GM12878 (cell line): ENCODE measurements at regions of chr16 and their contacts with region 1.

Region 1: DNA sequence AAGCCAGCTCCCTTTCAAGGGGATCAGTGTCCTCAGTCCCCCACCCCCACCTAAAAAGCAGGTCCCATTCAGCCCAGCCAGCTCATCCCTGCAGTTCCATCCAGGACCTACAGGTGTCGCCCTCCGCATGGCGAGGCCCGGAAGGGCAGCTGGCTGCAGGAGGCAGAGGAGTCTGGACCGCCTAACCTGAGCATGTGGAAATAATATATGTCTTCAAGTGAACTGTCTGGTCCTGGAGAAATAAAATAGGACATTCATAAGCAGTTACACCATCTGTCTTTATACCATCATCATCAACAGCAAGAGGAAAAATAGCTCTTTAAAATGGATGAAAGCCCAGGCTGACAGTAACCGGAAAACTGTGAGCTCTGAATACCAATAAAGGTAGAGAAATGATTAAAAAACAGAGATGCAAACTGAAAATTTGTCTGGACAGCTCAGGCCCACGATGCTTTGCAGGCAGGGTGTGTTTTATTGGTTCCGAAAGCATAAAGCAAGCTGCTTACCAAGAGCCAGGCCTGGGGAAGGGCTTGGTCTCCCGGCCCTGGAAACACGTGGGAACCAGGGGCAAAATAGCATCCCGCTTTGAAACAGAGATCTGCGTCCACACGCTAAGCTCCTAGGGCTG is 215.2 kb downstream of the ZFHX3 start:
- DNase-seq: no peak
- ATAC-seq: peak; percentile 96
- H3K4me3 ChIP-seq: no peak overlapping the region
- H3K27ac ChIP-seq: no peak overlapping the region
- H3K4me1 ChIP-seq: peaks cover 8% of the 10 kb centered on the region
- H3K27me3 ChIP-seq: no peaks in the 10 kb centered on the region
- CTCF ChIP-seq: peak; percentile 95 to 100 (median 99); a peak in 5 of 6 replicates
- EP300 ChIP-seq: no peak
- POLR2A ChIP-seq: no peak
- RAD21 ChIP-seq: peak; percentile 96

Region 2: DNA sequence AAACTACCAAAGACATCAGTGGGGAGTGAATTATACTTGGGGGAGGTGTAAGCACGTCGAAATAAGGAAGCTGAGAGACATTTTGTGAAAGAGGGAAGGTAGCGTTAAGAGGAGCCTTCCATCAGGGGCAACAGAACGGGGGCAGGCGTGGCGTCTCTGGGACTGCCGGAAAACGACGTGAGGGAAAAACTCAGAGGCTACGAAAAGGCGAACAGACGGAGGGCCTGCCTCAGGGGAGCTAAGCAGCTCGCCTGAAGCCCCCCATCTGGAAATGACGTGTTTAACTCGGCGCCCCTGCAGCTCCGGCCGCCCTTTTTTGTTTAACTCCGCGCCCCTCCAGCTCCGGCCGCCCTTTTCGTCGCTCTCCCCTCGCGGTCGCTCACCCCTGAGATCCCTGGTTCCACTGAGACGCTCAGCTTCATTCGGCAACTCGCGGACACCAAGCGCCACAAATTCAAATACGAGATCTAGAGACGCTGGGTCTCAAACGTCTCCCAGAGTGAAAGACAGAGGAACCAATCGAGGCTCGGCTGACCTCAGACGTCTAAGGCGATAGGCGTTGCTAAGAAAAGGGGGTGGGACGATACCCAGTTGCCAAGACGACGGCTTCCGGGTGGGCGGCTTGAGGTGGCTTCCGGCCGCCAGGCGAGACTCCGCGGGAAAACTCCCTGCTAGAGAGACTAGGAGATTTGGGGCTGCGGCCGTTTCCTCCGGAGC is 168.1 kb before region 1 on chr16:
- CTCF ChIA-PET with region 1: interaction called, 18 read pairs
- POLR2A ChIA-PET with region 1: no interaction called
- RAD21 ChIA-PET with region 1: interaction called, 3 read pairs
- SMC1A ChIA-PET with region 1: interaction called, 3 read pairs
- in situ Hi-C with region 1: no loop called
- intact Hi-C with region 1: loop called (anchors 10 kb)
- DNase-seq: peak; percentile 94
- ATAC-seq: peak; percentile 98
- H3K4me3 ChIP-seq: peak overlapping the region; percentile 74
- H3K27ac ChIP-seq: peak overlapping the region; percentile 90
- H3K4me1 ChIP-seq: peaks cover under 1% of the 10 kb centered on the region
- H3K27me3 ChIP-seq: no peaks in the 10 kb centered on the region
- CTCF ChIP-seq: no peak
- EP300 ChIP-seq: no peak
- POLR2A ChIP-seq: peak; percentile 84
- RAD21 ChIP-seq: no peak

Region 3: DNA sequence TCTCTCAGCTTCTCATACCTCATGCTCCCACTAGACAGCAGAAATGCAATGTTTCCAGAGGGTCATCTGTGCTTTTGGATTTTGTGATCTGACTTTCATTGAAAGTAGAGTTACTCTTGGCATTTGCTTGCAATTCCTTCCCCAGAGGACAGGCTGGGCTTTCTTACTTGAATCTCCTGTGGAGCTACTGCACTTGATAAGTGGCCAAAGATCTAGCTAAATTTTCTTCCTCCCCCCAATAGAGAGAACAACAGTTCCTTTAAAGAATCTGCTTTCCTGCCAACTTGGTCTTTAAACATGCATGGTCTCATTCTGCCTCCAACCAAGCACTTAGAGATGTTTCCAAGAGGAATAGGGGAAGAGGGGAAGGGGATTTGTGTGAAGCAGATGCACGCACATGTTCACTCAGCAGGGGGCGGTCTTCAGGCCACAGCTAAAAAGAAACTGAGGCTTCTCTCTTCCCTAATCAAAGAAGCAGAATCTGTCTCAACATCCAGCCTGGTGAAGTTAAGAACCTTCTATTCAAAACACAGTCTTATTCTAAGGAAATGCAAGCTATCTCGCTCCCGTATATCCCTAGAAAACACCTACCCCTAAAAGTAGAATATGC is 14.4 kb before region 1 on chr16:
- CTCF ChIA-PET with region 1: interaction called, 24 read pairs
- POLR2A ChIA-PET with region 1: no interaction called
- RAD21 ChIA-PET with region 1: interaction called, 5 read pairs
- SMC1A ChIA-PET with region 1: no interaction called
- in situ Hi-C with region 1: no loop called
- intact Hi-C with region 1: no loop called
- DNase-seq: no peak
- ATAC-seq: no peak
- H3K4me3 ChIP-seq: no peak overlapping the region
- H3K27ac ChIP-seq: no peak overlapping the region
- H3K4me1 ChIP-seq: peaks cover 12% of the 10 kb centered on the region; the same call in 1 of the 2 replicates
- H3K27me3 ChIP-seq: no peaks in the 10 kb centered on the region
- CTCF ChIP-seq: peak in 1 of 3 experiments; percentile 9; a peak in 1 of 6 replicates
- EP300 ChIP-seq: no peak
- POLR2A ChIP-seq: no peak
- RAD21 ChIP-seq: no peak

Region 4: GRCh38 chr16:72876221-72876620 is 43.5 kb after region 1 on chr16:
- CTCF ChIA-PET with region 1: interaction called, 12 read pairs
- POLR2A ChIA-PET with region 1: no interaction called
- RAD21 ChIA-PET with region 1: no interaction called
- SMC1A ChIA-PET with region 1: no interaction called
- in situ Hi-C with region 1: no loop called
- intact Hi-C with region 1: no loop called
- DNase-seq: peak; percentile 1
- ATAC-seq: no peak
- H3K4me3 ChIP-seq: no peak overlapping the region
- H3K27ac ChIP-seq: no peak overlapping the region
- H3K4me1 ChIP-seq: no peaks in the 10 kb centered on the region
- H3K27me3 ChIP-seq: no peaks in the 10 kb centered on the region
- CTCF ChIP-seq: no peak
- EP300 ChIP-seq: no peak
- POLR2A ChIP-seq: no peak
- RAD21 ChIP-seq: no peak

Region 5: GRCh38 chr16:73058221-73058615 is 225.5 kb after region 1 on chr16:
- CTCF ChIA-PET with region 1: interaction called, 21 read pairs
- POLR2A ChIA-PET with region 1: no interaction called
- RAD21 ChIA-PET with region 1: interaction called, 4 read pairs
- SMC1A ChIA-PET with region 1: interaction called, 6 read pairs
- in situ Hi-C with region 1: no loop called
- intact Hi-C with region 1: loop called (anchors 5 kb)
- DNase-seq: no peak
- ATAC-seq: peak; percentile 74
- H3K4me3 ChIP-seq: peak overlapping the region; percentile 72; the same call in 1 of the 2 replicates
- H3K27ac ChIP-seq: peak overlapping the region; percentile 39; the same call in 1 of the 2 replicates
- H3K4me1 ChIP-seq: peaks cover 13% of the 10 kb centered on the region
- H3K27me3 ChIP-seq: peaks cover 4 to 17% of the 10 kb centered on the region in 2 experiments
- CTCF ChIP-seq: no peak
- EP300 ChIP-seq: no peak
- POLR2A ChIP-seq: no peak
- RAD21 ChIP-seq: no peak